Dendritic cell treated with granulocyte-macrophage colony-stimulating factor and Interleukin-4, amounts not matched to agents 40 ng/mL and 50 ng/mL, for 4 days (primary cell): ENCODE measurements at regions of chr9 and their contacts with region 1.

Region 1: GRCh38 chr9:70542311-70542931 is 128.0 kb upstream of the KLF9 start:
- H3K4me3 Mint-ChIP-seq: no peak overlapping the region
- H3K27ac Mint-ChIP-seq: no peak overlapping the region
- H3K4me1 Mint-ChIP-seq: peaks cover 16% of the 10 kb centered on the region
- H3K27me3 Mint-ChIP-seq: peaks cover 1% of the 10 kb centered on the region

Region 2: DNA sequence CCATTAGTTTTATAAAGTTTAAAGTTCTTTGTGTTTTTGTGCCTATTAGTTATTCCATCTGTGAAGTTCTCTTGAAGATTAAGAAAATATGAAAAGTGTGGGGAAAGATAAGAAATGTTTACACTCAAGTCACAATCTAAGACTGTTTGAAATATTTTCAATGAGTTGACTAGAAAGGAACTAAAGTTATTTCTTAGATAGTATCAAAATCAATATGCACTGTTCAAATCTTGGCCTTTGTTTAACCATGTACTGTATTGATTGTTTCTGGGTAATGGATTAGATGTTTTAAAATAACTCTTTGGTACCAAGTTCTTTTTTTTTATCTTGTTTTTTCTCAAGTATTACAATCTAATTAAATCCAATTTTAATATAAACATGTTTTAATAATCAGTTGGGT is 237.6 kb before region 1 on chr9:
- intact Hi-C with region 1: no loop called
- H3K4me3 Mint-ChIP-seq: no peak overlapping the region
- H3K27ac Mint-ChIP-seq: no peak overlapping the region
- H3K4me1 Mint-ChIP-seq: no peaks in the 10 kb centered on the region
- H3K27me3 Mint-ChIP-seq: no peaks in the 10 kb centered on the region

Region 3: DNA sequence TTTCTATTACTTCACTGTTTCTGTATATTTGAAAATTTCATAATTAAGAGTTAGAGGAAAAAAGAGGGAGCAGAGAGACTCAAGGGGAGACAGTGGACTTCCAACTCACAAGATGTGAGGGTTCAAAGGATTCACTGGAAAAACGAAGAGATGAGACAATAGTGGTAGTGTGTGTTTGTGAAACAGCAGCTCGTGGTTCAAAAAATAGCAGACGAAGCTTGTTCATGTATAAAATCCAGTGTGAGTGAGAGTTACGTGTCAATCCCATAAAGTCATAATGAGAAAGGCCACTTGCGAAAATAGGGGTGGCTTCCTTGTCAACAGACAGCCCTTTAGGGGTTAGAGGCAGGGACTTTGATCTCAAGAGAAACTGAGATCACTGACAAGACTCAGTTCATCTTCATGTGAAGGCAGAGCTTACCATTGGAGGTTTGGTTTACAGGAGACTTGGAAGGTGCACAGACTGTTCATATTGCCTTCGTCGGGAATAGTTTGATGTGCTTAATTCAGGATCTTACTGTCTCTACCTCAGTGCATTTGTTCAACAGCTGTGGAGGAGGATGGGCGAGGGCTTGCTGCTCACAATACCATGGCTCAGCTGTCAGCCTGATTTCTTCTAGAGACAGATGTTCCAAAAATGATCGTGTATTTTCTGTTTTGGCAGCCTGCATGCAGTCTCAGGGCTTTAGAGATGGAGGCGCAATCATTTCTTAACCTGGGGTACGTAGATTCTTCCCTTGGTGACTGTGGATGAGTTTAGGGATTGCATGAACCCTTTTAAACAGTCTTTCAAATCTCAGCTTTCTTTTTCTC is 22.3 kb before region 1 on chr9:
- intact Hi-C with region 1: no loop called
- H3K4me3 Mint-ChIP-seq: no peak overlapping the region
- H3K27ac Mint-ChIP-seq: no peak overlapping the region
- H3K4me1 Mint-ChIP-seq: peaks cover 4% of the 10 kb centered on the region
- H3K27me3 Mint-ChIP-seq: no peaks in the 10 kb centered on the region

Region 4: GRCh38 chr9:70587201-70587600 is 44.8 kb after region 1 on chr9:
- intact Hi-C with region 1: loop called (anchors 5 kb)
- H3K4me3 Mint-ChIP-seq: no peak overlapping the region
- H3K27ac Mint-ChIP-seq: no peak overlapping the region
- H3K4me1 Mint-ChIP-seq: peaks cover under 1% of the 10 kb centered on the region
- H3K27me3 Mint-ChIP-seq: no peaks in the 10 kb centered on the region

Region 5: DNA sequence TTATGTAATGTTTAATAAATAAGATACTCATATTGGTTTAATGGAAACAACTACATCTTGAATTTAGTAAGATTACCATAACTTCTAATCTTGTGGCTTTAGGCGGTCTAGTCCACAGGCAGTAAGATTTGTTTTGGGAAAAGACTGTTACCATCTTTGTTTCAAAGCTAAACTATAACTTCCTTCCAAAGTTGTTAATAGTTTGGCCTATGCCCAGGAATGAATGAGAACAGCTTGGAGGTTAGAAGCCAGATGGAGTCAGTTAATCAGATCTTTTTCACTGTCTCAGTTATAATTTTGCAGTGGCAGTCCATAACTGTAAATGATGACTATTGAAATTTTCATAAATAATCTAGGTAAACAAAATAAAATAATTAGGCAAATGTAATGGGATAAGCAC is 113.9 kb after region 1 on chr9:
- intact Hi-C with region 1: no loop called
- H3K4me3 Mint-ChIP-seq: no peak overlapping the region
- H3K27ac Mint-ChIP-seq: no peak overlapping the region
- H3K4me1 Mint-ChIP-seq: no peaks in the 10 kb centered on the region
- H3K27me3 Mint-ChIP-seq: no peaks in the 10 kb centered on the region